GM12878 (cell line): ENCODE measurements at regions of chr1 and their contacts with region 1.

Region 1: DNA sequence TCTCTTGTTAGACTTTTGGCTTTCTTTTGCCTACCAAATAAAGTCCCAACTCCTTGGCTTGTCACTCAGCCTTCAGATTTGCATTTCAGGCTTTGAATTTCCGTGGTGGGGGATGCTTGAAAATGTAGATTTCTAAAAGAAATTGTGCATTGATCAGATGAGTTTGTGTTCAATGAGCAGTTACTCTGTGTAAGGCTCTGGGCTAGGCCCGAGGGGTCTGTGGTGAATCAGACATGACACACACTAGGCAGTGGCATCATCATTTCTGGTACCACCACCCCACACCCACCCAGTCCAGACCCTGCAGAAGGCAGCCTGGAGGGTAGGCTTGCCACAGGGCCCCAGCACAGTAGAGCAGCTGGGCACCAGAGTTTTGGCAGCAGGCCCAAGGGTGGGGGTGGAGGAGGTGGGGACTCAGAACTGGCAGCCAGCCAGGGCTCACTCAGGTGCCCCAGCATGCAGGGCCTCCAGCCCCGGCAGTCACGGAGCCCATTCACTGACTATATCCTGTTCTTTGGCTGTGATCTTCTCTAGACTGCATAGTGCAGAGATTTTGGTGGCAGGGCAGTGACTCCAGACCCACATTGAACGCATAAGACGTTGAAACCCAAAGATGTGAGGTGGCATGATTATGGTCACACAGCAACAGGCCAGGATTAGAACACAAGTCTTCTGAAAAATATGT is 97.2 kb upstream of the ARTN start:
- DNase-seq: peak; percentile 88
- ATAC-seq: peak; percentile 69
- H3K4me3 ChIP-seq: no peak overlapping the region
- H3K27ac ChIP-seq: peak overlapping the region; percentile 95
- H3K4me1 ChIP-seq: peaks cover 67% of the 10 kb centered on the region
- H3K27me3 ChIP-seq: no peaks in the 10 kb centered on the region
- CTCF ChIP-seq: no peak
- EP300 ChIP-seq: no peak
- POLR2A ChIP-seq: 0 out of 2 replicates have a peak, but pooled peaks have one; percentile 32
- RAD21 ChIP-seq: no peak

Region 2: DNA sequence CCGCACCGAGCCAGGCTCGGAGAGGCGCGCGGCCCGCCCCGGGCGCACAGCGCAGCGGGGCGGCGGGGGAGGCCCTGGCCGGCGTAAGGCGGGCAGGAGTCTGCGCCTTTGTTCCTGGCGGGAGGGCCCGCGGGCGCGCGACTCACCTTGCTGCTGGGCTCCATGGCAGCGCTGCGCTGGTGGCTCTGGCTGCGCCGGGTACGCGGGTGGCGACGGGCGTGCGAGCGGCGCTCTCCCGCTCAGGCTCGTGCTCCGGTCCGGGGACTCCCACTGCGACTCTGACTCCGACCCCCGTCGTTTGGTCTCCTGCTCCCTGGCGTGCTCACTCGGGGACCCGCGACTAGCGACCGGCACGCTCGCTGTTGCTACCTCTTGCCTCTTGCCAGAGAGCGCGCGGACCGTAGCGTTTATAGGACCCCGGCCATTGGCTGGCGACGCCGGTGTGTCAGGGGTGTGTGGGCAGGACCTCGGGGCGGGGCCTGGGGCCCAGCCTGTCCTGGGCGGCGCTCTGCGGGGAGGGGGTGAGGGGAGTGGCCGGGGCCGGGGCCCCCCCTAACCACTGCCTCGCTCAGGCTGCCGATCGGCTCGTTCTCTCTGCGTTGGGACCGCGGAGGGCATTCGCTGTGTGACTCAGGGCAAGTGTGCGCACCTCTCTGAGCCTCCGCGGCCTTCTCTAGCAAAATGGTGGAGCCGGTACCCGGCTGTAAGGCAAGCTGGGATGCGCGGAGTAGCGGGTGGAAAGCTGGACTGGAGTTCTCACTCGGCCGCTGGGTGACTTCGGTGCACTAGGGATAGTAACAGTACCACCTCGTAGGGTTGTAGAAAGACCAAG is 877.7 kb before region 1 on chr1 and contains the start of gene SLC2A1:
- CTCF ChIA-PET with region 1: no interaction called
- POLR2A ChIA-PET with region 1: no interaction called
- RAD21 ChIA-PET with region 1: no interaction called
- SMC1A ChIA-PET with region 1: no interaction called
- in situ Hi-C with region 1: loop called (anchors 10 kb)
- intact Hi-C with region 1: no loop called
- DNase-seq: peak; percentile 79
- ATAC-seq: peak; percentile 88
- H3K4me3 ChIP-seq: peak within 1 kb of the TSS; percentile 88
- H3K27ac ChIP-seq: peak within 1 kb of the TSS; percentile 78
- H3K4me1 ChIP-seq: peaks cover 38% of the 10 kb centered on the region
- H3K27me3 ChIP-seq: no peaks in the 10 kb centered on the region
- CTCF ChIP-seq: no peak; a peak in 1 of 6 replicates
- EP300 ChIP-seq: peak in 1 of 2 experiments; percentile 14; a peak in 1 of 4 replicates
- POLR2A ChIP-seq: peak; percentile 100
- RAD21 ChIP-seq: no peak
- polyA plus RNA-seq, gene SLC2A1: 5.7 to 8.2 TPM

Region 3: DNA sequence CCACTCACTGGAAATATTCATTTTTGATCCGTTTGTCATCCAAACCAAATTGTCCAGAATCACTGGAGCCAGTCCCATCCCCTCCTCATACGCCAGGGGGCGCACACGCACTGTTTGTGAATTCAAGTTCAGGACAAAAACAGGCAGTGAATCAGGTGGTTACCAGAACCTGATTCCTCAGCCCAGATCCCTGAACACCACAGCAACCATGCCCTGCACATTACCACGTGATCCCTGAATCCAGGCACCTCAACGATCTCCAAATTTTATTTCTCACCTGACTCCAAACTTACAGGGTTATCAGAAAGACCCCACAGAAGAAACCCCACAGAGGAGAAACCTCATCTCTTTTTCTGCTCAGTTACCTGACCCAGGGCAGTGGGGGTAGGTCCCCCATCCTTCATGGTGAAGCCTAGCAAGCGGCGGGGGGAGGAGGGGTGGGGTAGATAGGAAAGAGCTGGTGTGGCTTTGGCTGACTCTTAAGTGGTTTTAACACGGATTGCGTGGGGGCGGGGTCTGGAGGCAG is 307.1 kb before region 1 on chr1:
- CTCF ChIA-PET with region 1: no interaction called
- POLR2A ChIA-PET with region 1: interaction called, 11 read pairs
- RAD21 ChIA-PET with region 1: no interaction called
- SMC1A ChIA-PET with region 1: no interaction called
- in situ Hi-C with region 1: no loop called
- intact Hi-C with region 1: no loop called
- DNase-seq: peak; percentile 30
- ATAC-seq: peak; percentile 91
- H3K4me3 ChIP-seq: no peak overlapping the region
- H3K27ac ChIP-seq: no peak overlapping the region
- H3K4me1 ChIP-seq: no peaks in the 10 kb centered on the region
- H3K27me3 ChIP-seq: peaks cover 7 to 11% of the 10 kb centered on the region in 2 experiments
- CTCF ChIP-seq: peak; percentile 91 to 95 (median 95); a peak in 5 of 6 replicates
- EP300 ChIP-seq: no peak
- POLR2A ChIP-seq: no peak
- RAD21 ChIP-seq: peak; percentile 92

Region 4: DNA sequence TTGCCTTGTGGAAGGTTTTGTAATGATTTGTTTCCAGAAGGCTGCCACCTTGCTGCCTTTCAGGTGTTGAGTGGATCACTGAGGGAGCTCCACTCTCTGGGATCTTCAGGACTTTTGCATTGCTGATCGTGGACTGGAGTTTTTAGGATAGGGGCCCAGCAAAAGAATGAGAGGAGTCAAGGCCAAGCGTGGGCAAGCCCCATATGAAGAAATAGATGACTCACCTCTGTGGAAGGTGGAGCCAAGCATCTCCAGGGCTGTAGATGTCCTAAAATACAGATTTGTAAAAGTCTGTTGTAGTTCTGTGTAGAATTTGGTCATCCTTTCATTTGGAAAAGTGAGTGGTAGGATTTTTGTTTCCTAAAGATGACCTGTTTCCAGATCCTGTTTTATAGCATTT is 62.0 kb before region 1 on chr1:
- CTCF ChIA-PET with region 1: interaction called, 3 read pairs
- POLR2A ChIA-PET with region 1: interaction called, 3 read pairs
- RAD21 ChIA-PET with region 1: interaction called, 3 read pairs
- SMC1A ChIA-PET with region 1: interaction called, 28 read pairs
- in situ Hi-C with region 1: no loop called
- intact Hi-C with region 1: no loop called
- DNase-seq: no peak
- ATAC-seq: no peak
- H3K4me3 ChIP-seq: no peak overlapping the region
- H3K27ac ChIP-seq: no peak overlapping the region
- H3K4me1 ChIP-seq: peaks cover 9% of the 10 kb centered on the region
- H3K27me3 ChIP-seq: no peaks in the 10 kb centered on the region
- CTCF ChIP-seq: no peak
- EP300 ChIP-seq: no peak
- POLR2A ChIP-seq: no peak
- RAD21 ChIP-seq: no peak

Region 5: GRCh38 chr1:43783671-43784205 is 52.7 kb before region 1 on chr1:
- CTCF ChIA-PET with region 1: no interaction called
- POLR2A ChIA-PET with region 1: no interaction called
- RAD21 ChIA-PET with region 1: interaction called, 6 read pairs
- SMC1A ChIA-PET with region 1: interaction called, 11 read pairs
- in situ Hi-C with region 1: no loop called
- intact Hi-C with region 1: no loop called
- DNase-seq: peak; percentile 84
- ATAC-seq: peak; percentile 87
- H3K4me3 ChIP-seq: no peak overlapping the region
- H3K27ac ChIP-seq: peak overlapping the region; percentile 88
- H3K4me1 ChIP-seq: peaks cover 19% of the 10 kb centered on the region
- H3K27me3 ChIP-seq: no peaks in the 10 kb centered on the region
- CTCF ChIP-seq: no peak
- EP300 ChIP-seq: peak in 1 of 2 experiments; percentile 59; a peak in 2 of 4 replicates
- POLR2A ChIP-seq: no peak
- RAD21 ChIP-seq: no peak

Region 6: GRCh38 chr1:43853161-43853921 is 16.9 kb after region 1 on chr1:
- CTCF ChIA-PET with region 1: interaction called, 3 read pairs
- POLR2A ChIA-PET with region 1: interaction called, 3 read pairs
- RAD21 ChIA-PET with region 1: interaction called, 7 read pairs
- SMC1A ChIA-PET with region 1: interaction called, 21 read pairs
- in situ Hi-C with region 1: no loop called
- intact Hi-C with region 1: no loop called
- DNase-seq: peak; percentile 87
- ATAC-seq: peak; percentile 92
- H3K4me3 ChIP-seq: peak overlapping the region; percentile 26; the same call in 1 of the 2 replicates
- H3K27ac ChIP-seq: peak overlapping the region; percentile 67
- H3K4me1 ChIP-seq: peaks cover 13% of the 10 kb centered on the region
- H3K27me3 ChIP-seq: no peaks in the 10 kb centered on the region
- CTCF ChIP-seq: no peak
- EP300 ChIP-seq: no peak
- POLR2A ChIP-seq: no peak
- RAD21 ChIP-seq: no peak

Region 7: DNA sequence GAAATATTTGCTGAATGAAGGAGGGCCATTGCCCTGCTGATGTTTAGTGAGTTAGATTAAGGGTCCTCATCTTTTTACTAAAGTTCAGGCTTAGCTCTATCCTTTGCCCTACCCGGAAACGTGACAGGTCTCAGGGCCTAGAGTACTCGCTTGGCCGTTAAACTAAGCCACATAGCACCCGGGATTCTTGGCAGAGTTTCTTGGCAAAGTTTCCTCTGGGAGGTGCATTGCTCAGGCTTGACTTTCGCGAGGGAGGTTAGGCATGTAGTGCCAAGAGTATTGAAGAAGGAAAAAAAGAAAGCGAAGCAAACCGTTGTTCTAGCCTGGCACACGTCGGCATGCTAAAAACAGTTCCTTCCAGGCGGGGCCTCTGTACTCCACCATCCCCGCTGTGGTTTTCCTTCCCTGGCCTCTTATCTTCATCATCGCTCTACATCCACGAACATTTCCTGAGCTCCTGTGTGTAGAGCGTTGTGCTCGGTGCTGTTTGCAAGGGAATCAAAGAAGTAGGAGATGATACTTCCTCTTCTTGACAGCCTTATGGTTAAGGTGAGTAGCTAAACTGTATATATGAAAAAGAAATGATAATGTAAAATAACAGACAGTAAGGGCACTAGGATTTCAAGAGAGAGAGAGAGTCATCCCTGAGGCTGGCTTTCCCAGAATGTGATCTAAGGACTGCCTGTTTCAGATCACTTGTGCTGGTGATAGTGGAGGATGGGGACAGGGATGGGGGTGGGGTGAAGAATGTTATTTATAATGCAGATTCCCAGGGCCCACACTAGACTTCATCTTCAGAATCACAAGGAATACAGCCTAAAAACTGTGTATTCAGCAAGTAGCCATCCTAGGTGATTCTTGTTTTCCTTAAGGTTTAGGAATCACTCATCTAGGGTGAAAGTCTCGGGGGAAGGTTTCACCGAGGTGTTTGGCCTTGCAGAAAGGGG is 587.5 kb after region 1 on chr1:
- CTCF ChIA-PET with region 1: no interaction called
- POLR2A ChIA-PET with region 1: no interaction called
- RAD21 ChIA-PET with region 1: no interaction called
- SMC1A ChIA-PET with region 1: no interaction called
- in situ Hi-C with region 1: no loop called
- intact Hi-C with region 1: no loop called
- DNase-seq: no peak
- ATAC-seq: no peak; the same call in 2 of the 3 replicates
- H3K4me3 ChIP-seq: no peak overlapping the region
- H3K27ac ChIP-seq: no peak overlapping the region
- H3K4me1 ChIP-seq: no peaks in the 10 kb centered on the region
- H3K27me3 ChIP-seq: peaks cover 10 to 31% of the 10 kb centered on the region in 2 experiments
- CTCF ChIP-seq: no peak
- EP300 ChIP-seq: no peak
- POLR2A ChIP-seq: no peak
- RAD21 ChIP-seq: no peak